ENCODE measurements at regions of chr9 and their contacts with region 1.

Region 1: DNA sequence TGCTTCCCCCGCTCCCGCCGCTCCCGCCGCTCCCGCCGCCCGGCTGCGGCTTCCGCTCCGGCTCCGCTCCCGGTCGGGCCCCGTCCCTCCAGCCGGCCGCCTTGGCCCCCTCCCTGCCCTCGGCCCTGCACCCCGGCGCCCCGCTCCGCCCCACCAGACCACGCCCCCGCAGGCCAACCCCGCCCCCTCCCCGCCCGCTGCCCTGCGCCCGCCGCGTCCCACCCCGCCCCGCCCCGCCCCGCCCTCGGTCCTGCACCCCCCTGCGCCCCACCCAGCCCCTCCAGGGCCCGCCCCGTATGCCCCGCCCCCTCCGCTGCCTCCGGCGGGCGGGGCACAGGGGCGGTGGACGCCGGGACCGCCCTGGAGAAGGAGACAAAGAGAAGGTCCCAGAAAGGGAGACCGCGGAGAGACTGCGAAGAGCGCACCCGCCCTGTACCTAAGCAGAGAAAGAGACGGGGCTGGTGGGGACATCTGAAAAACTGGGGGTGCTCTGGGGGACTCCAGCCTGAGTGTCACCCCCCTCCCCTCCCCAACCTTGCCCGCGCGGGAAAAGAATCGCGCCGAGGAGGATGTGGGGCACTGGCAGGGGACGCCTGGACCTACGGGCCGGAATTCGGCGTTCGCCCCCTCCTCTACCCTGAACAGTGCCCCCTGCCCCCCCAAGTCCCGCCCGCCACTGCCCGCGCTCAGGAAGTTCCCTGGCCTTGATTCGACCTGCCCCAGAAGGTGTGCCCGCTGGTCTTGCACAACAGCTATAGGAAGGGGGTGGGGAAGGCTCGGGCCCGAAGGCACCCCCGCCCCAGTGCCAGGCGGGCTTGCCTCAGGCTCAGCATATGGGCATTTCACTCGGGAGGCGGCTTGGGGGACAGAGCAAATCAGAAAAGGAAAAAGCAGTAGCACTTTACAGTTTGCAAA is 42.8 kb upstream of the STXBP1 start:
- DNase-seq: peak; percentile 44 to 92 (median 74)
- ATAC-seq: peak; percentile 78
- H3K4me3 ChIP-seq: peak overlapping the region; percentile 77
- H3K4me3 Mint-ChIP-seq: peak overlapping the region; percentile 87
- H3K27ac ChIP-seq: peak overlapping the region; percentile 46 to 52
- H3K27ac Mint-ChIP-seq: peak overlapping the region; percentile 63
- H3K4me1 ChIP-seq: peaks cover 43% of the 10 kb centered on the region
- H3K4me1 Mint-ChIP-seq: peaks cover 20% of the 10 kb centered on the region
- H3K27me3 ChIP-seq: no peaks in the 10 kb centered on the region
- H3K27me3 Mint-ChIP-seq: no peaks in the 10 kb centered on the region
- CTCF ChIP-seq: no peak

Region 2: GRCh38 chr9:127503947-127504782 is 65.1 kb before region 1 on chr9:
- CTCF ChIA-PET with region 1: no interaction called
- POLR2A ChIA-PET with region 1: no interaction called
- intact Hi-C with region 1: no loop called
- DNase-seq: peak; percentile 70 to 89 (median 78)
- ATAC-seq: peak; percentile 93
- H3K4me3 ChIP-seq: no peak overlapping the region
- H3K4me3 Mint-ChIP-seq: no peak overlapping the region
- H3K27ac ChIP-seq: no peak overlapping the region
- H3K27ac Mint-ChIP-seq: no peak overlapping the region
- H3K4me1 ChIP-seq: peaks cover 3% of the 10 kb centered on the region
- H3K4me1 Mint-ChIP-seq: peaks cover 4% of the 10 kb centered on the region
- H3K27me3 ChIP-seq: no peaks in the 10 kb centered on the region
- H3K27me3 Mint-ChIP-seq: no peaks in the 10 kb centered on the region
- CTCF ChIP-seq: peak; percentile 88

Region 3: GRCh38 chr9:127611899-127612790 is 42.9 kb after region 1 on chr9 and contains the start of gene STXBP1:
- CTCF ChIA-PET with region 1: no interaction called
- POLR2A ChIA-PET with region 1: interaction called, 3 read pairs
- intact Hi-C with region 1: loop called in 1 of 2 experiments (anchors 2 kb)
- DNase-seq: peak; percentile 66 to 93 (median 84)
- ATAC-seq: peak; percentile 76
- H3K4me3 ChIP-seq: peak within 1 kb of the TSS; percentile 57
- H3K4me3 Mint-ChIP-seq: peak within 1 kb of the TSS; percentile 99
- H3K27ac ChIP-seq: no peak within 1 kb of the TSS
- H3K27ac Mint-ChIP-seq: peak within 1 kb of the TSS; percentile 45
- H3K4me1 ChIP-seq: peaks cover 35% of the 10 kb centered on the region
- H3K4me1 Mint-ChIP-seq: peaks cover 32% of the 10 kb centered on the region
- H3K27me3 ChIP-seq: peaks cover 0 to 8% of the 10 kb centered on the region in 2 experiments
- H3K27me3 Mint-ChIP-seq: peaks cover 47% of the 10 kb centered on the region
- CTCF ChIP-seq: no peak
- total RNA-seq, gene STXBP1: 1.9 to 3.4 TPM

Region 4: GRCh38 chr9:128393171-128393775 is 824.0 kb after region 1 on chr9:
- CTCF ChIA-PET with region 1: no interaction called
- POLR2A ChIA-PET with region 1: no interaction called
- intact Hi-C with region 1: no loop called
- DNase-seq: no peak
- ATAC-seq: no peak
- H3K4me3 ChIP-seq: no peak overlapping the region
- H3K4me3 Mint-ChIP-seq: no peak overlapping the region
- H3K27ac ChIP-seq: no peak overlapping the region
- H3K27ac Mint-ChIP-seq: no peak overlapping the region
- H3K4me1 ChIP-seq: peaks cover 3% of the 10 kb centered on the region
- H3K4me1 Mint-ChIP-seq: peaks cover 7% of the 10 kb centered on the region
- H3K27me3 ChIP-seq: no peaks in the 10 kb centered on the region
- H3K27me3 Mint-ChIP-seq: peaks cover 3% of the 10 kb centered on the region
- CTCF ChIP-seq: no peak